Activated CD8-positive, alpha-beta T cell treated with anti-CD3 and anti-CD28 coated beads for 36 hours (primary cell): ENCODE measurements at regions of chr1 and their contacts with region 1.

Region 1: DNA sequence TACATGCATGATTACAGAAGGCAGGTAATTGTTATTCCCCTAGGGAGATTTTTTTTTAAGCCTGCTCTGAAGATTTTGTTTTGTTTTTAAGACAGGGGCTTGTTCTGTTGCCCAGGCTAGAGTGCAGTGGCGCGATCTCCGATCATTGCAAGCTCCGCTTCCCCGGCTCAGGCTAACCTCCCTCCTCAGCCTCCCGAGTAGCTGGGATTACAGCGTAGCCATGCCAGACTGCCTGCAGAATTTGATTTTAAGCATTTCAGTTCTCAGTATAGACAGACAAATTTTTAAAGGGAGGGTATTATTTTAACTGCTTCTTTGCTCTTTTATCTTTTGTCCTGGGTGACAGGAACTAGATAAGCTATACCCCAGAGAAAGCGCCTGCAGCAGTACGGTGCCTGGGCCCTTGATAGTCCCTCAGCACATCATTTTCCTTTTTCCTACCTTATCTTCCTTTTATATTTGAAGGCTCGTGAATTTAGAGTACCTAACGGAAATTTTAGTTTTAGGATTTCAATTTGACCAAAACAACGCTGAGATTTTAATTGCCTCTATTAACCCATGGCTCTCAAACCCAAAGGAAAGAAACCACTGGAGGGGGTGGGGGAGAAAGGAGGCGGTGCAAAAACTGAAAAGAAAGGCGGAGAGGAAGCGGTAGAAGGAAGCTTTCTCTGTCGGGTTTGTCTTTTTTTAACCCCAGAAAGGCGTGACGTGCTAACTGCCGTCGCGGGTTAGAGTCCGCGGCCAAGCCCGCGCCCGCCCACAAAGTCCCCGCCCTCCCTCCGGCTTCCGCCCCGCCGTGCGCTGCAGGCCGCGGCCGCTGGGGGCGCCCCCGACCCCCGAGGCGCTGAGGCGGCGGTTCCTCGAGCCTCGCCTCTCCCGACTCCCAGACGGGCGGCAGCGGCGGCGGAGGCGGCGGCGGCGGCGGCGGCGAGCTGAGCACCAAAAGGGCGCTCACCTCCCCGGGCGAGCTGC is at the start of gene EEIG2:
- DNase-seq: peak; percentile 91
- ATAC-seq: peak; percentile 88
- H3K4me3 Mint-ChIP-seq: peak within 1 kb of the TSS; percentile 95
- H3K27ac Mint-ChIP-seq: peak within 1 kb of the TSS; percentile 84
- H3K4me1 Mint-ChIP-seq: peaks cover 35% of the 10 kb centered on the region
- H3K27me3 Mint-ChIP-seq: no peaks in the 10 kb centered on the region
- CTCF ChIP-seq: peak; percentile 66
- total RNA-seq, gene EEIG2: 10.4 to 12.6 TPM

Region 2: GRCh38 chr1:107767156-107767582 is 792.3 kb before region 1 on chr1:
- CTCF ChIA-PET with region 1: no interaction called
- POLR2A ChIA-PET with region 1: no interaction called
- intact Hi-C with region 1: loop called (anchors 5 kb)
- DNase-seq: no peak
- ATAC-seq: no peak
- H3K4me3 Mint-ChIP-seq: no peak overlapping the region
- H3K27ac Mint-ChIP-seq: no peak overlapping the region
- H3K4me1 Mint-ChIP-seq: no peaks in the 10 kb centered on the region
- H3K27me3 Mint-ChIP-seq: no peaks in the 10 kb centered on the region
- CTCF ChIP-seq: no peak

Region 3: DNA sequence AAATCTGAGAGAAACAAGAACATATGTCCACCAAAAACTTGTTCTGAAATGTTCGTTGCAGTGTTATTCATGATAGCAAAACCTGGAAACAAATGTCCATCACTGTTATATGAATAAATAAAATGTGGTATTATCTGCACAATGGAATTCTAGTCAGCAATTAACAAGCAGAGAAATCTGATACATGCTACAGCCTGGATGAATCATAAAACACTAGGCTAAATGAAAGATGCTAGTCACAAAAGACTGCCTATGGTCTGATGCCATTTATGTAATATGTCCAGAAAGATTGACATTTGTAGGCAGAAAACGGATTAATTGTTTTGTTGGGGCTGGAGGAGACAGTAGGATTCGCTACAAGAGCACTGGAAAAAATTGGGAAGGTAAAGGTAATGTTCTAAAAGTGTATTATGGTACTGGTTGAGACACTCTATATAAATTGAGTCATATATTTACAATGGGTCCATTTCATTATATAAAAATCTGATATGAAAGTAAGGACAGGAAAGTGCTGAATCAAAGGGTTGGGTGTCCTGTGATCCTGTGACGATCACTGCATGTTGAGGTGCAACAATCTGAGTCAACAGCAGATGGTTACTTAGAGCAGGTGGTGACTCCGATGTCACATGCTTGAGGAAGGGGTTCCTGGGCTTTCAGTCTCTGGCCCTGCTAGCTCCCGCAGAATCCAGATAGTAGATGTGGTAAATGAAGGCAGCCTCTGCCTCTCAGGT is 213.5 kb before region 1 on chr1:
- CTCF ChIA-PET with region 1: no interaction called
- POLR2A ChIA-PET with region 1: no interaction called
- intact Hi-C with region 1: no loop called
- DNase-seq: no peak
- ATAC-seq: no peak
- H3K4me3 Mint-ChIP-seq: no peak overlapping the region
- H3K27ac Mint-ChIP-seq: no peak overlapping the region
- H3K4me1 Mint-ChIP-seq: no peaks in the 10 kb centered on the region
- H3K27me3 Mint-ChIP-seq: peaks cover 11% of the 10 kb centered on the region
- CTCF ChIP-seq: no peak

Region 4: DNA sequence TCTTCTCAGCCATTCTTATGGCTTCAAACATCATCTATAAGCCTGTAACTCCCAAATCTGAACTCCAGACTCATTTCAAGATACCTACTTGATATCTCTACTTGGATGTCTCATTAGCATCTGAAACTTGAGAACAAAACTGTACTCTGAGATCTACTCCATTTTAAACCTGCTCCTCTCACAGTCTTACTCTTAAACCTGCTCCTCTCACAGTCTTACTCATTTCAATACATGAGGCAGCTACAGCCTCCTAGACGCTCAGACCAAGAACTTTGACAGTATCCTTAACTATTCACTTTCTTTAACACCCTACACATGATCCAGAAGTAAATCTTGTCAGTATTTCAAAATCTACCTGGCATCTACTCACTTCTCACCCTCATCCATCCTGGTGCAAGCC is 55.1 kb before region 1 on chr1:
- CTCF ChIA-PET with region 1: interaction called, 110 read pairs
- POLR2A ChIA-PET with region 1: interaction called, 4 read pairs
- intact Hi-C with region 1: loop called (anchors 1 kb)
- DNase-seq: peak; percentile 16
- ATAC-seq: peak; percentile 85
- H3K4me3 Mint-ChIP-seq: no peak overlapping the region
- H3K27ac Mint-ChIP-seq: no peak overlapping the region
- H3K4me1 Mint-ChIP-seq: no peaks in the 10 kb centered on the region
- H3K27me3 Mint-ChIP-seq: peaks cover 26% of the 10 kb centered on the region
- CTCF ChIP-seq: no peak

Region 5: GRCh38 chr1:108537976-108538375 is 21.5 kb before region 1 on chr1:
- CTCF ChIA-PET with region 1: interaction called, 14 read pairs
- POLR2A ChIA-PET with region 1: interaction called, 6 read pairs
- intact Hi-C with region 1: no loop called
- DNase-seq: no peak
- ATAC-seq: no peak
- H3K4me3 Mint-ChIP-seq: no peak overlapping the region
- H3K27ac Mint-ChIP-seq: no peak overlapping the region
- H3K4me1 Mint-ChIP-seq: peaks cover 10% of the 10 kb centered on the region
- H3K27me3 Mint-ChIP-seq: peaks cover 9% of the 10 kb centered on the region
- CTCF ChIP-seq: no peak

Region 6: DNA sequence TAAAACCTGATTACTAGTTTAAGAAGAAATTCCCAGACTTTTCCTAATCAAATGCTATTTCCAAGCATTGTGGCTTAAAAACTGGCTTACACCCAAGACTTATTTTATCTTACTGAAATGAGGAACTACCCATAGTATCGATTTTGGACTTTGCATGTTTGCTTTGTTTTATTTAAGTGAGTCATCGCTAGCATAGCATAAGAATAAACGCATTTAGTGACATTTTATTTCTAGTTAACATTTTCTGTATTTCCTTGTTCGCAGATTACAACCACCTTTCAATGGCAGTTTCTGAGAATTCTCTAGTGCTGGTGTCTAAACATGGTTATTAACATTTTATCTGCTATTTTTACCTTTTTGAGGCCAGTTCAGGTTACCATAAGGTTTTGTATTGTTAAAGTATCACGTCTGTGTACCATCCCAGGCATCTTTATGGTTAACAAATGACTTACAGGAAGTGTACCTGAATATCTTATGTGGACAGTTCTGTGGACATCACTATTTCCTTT is 24.9 kb after region 1 on chr1:
- CTCF ChIA-PET with region 1: interaction called, 24 read pairs
- POLR2A ChIA-PET with region 1: interaction called, 3 read pairs
- intact Hi-C with region 1: no loop called
- DNase-seq: no peak
- ATAC-seq: peak; percentile 34
- H3K4me3 Mint-ChIP-seq: no peak overlapping the region
- H3K27ac Mint-ChIP-seq: peak overlapping the region; percentile 44
- H3K4me1 Mint-ChIP-seq: peaks cover 49% of the 10 kb centered on the region
- H3K27me3 Mint-ChIP-seq: no peaks in the 10 kb centered on the region
- CTCF ChIP-seq: no peak

Region 7: DNA sequence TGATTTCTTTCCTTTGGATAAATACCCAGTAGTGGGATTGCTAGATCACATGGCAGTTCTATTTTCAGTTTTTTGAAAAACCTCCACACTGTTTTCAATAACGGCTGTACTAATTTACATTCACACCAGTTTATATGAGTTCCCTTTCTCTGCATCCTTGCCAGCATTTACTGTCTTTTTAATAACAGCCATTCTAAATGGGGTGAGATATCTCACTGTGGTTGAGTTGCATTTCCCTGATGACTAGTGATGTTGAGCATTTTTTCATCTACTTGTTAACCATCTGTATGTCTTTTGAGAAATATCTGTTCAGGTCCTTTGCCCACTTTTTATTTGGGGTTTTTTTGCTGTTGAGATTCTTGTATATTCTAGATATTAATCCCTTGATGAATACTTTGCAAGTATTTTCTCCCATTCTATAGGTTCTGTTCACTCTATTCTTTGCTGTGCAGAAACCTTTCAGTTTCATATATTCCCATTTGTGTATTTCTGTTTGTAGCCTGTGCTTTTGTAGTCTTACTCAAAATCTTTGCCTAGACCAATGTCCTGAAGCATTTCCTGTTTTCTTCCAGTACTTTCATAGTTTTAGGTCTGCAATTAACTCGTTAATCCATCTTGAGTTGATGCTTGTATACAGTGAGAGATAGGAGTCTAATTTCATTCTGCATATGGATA is 94.1 kb after region 1 on chr1:
- CTCF ChIA-PET with region 1: no interaction called
- POLR2A ChIA-PET with region 1: no interaction called
- intact Hi-C with region 1: no loop called
- DNase-seq: no peak
- ATAC-seq: no peak
- H3K4me3 Mint-ChIP-seq: no peak overlapping the region
- H3K27ac Mint-ChIP-seq: peak overlapping the region; percentile 43
- H3K4me1 Mint-ChIP-seq: peaks cover 25% of the 10 kb centered on the region
- H3K27me3 Mint-ChIP-seq: no peaks in the 10 kb centered on the region
- CTCF ChIP-seq: no peak

Region 8: GRCh38 chr1:108691942-108692723 is 132.6 kb after region 1 on chr1 and contains the start of gene PRPF38B:
- CTCF ChIA-PET with region 1: interaction called, 17 read pairs
- POLR2A ChIA-PET with region 1: interaction called, 6 read pairs
- intact Hi-C with region 1: no loop called
- DNase-seq: peak; percentile 96
- ATAC-seq: peak; percentile 89
- H3K4me3 Mint-ChIP-seq: peak within 1 kb of the TSS; percentile 97
- H3K27ac Mint-ChIP-seq: peak within 1 kb of the TSS; percentile 97
- H3K4me1 Mint-ChIP-seq: peaks cover 31% of the 10 kb centered on the region
- H3K27me3 Mint-ChIP-seq: no peaks in the 10 kb centered on the region
- CTCF ChIP-seq: no peak
- total RNA-seq, gene PRPF38B: 62.5 to 65.3 TPM

Region 9: DNA sequence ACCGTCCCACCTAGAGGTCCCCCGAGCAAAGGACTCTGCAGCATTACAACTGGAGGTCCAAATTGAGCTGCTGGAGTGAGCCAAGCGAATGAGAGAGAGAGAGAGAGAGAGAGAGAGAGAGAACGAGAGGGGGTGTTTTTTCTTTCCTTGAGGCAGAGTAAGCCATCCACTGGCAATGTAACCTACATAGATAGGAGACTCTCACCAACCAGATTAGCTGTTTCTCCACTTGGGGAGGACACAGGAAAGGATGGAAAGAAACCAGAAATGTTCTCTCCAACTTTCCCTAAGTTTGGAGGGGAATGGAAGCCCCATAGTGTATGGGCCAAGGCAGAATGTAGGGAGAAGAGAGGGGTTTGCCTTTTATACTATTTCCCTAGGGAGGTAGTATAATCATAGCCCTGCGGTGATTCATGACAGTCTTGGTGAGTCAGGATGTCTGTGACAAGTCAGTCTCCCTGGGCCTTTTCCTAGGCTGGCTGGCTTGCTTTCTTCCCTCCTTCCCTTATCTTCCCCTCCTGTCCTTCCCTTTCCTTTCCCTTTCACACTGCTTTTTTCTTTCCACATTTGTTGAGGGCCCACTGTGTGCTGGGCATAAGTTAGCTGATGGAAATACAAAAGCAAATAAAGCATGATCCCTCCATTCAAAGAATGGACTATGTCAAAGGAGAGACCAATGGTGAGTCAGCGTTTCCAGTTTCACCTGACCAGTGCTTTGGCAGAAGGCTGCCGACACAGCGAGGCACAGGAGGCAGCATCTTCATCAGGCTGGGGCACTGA is 160.3 kb after region 1 on chr1:
- CTCF ChIA-PET with region 1: no interaction called
- POLR2A ChIA-PET with region 1: no interaction called
- intact Hi-C with region 1: no loop called
- DNase-seq: no peak
- ATAC-seq: no peak
- H3K4me3 Mint-ChIP-seq: no peak overlapping the region
- H3K27ac Mint-ChIP-seq: no peak overlapping the region
- H3K4me1 Mint-ChIP-seq: no peaks in the 10 kb centered on the region
- H3K27me3 Mint-ChIP-seq: no peaks in the 10 kb centered on the region
- CTCF ChIP-seq: no peak

Region 10: GRCh38 chr1:108886292-108886691 is 326.8 kb after region 1 on chr1:
- CTCF ChIA-PET with region 1: no interaction called
- POLR2A ChIA-PET with region 1: no interaction called
- intact Hi-C with region 1: no loop called
- DNase-seq: no peak
- ATAC-seq: no peak
- H3K4me3 Mint-ChIP-seq: no peak overlapping the region
- H3K27ac Mint-ChIP-seq: no peak overlapping the region
- H3K4me1 Mint-ChIP-seq: no peaks in the 10 kb centered on the region
- H3K27me3 Mint-ChIP-seq: peaks cover 5% of the 10 kb centered on the region
- CTCF ChIP-seq: no peak